HEK293T (cell line): ENCODE measurements at regions of chr5 and their contacts with region 1.

Region 1: DNA sequence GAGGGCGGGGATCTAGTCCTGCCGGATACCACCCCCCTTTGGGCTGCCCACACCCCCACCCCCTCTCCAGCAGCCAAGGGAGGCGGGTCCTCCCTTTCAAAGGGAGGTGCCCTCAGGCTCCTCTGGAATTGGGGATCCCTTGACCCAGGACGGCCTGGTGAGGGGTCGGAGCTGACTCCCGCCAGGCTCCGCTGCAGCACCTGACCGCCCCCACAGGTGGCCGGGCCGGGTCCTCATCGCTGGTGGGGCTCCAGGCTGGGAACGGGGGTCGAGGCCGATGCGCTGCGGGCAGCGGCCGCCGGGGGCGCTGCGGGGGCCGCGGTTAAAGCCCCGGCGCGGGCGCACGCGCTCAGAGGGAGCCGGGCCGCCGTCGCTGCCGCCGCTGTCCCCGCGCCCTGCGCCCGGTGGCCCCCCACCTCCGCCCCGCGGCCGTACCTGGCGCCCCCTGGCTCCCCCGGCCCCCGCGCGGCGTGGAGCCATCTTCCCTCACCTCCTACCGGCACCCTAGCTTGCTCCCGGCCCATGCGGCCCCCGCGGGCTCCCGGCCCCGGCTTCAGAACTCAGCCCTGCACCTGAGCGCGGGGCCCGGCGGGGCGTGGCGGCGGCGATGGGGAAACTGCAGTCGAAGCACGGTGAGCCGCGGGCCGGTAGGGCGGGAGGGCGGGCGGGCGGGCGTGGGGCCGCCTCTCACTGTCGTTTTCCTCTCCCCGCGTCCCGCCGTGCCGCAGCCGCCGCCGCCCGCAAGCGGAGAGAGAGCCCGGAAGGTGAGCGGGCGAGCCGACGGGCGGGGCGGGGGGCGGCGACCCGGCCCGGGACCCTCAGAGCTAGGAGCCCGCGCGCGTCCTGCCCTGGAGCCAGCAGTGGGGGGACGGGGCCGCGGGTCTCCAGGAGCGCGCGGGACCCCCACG is at the start of gene NKD2:
- DNase-seq: peak; percentile 87

Region 2: DNA sequence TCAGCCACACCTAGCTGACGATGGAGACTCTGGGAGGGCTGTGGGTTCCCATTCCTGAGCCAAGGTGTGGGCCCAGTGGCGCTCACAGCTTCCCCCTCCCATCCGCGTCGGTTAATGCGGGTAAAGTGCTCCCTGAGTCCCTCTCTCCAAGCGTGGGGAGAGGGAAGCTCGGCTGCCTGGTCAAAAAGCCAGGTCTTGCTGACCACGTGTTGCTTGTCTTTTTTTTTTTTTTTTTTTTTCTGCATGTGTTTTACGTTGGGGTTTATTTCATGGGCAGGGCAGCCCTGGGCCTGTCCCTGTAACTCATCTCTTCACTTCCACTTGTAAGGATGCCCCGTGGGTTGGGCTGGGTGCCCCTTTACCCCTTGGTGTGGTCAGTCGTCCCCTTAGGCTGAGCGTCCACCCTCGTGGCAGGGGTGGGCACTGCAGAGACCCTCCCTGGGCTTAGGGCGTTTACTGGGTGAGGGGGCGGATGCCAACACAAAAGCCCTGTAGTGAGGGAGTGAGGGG is 11.8 kb after region 1 on chr5:
- CTCF ChIA-PET with region 1: interaction called, 14 read pairs
- POLR2A ChIA-PET with region 1: interaction called, 3 read pairs
- DNase-seq: no peak